MCF 10A (cell line): ENCODE measurements at regions of chr18 and their contacts with region 1.

Region 1: GRCh38 chr18:44589693-44590355 is 90.9 kb upstream of the SETBP1 start:
- DNase-seq: peak; percentile 78
- H3K4me3 Mint-ChIP-seq: no peak overlapping the region
- H3K27ac Mint-ChIP-seq: peak overlapping the region; percentile 69
- H3K4me1 Mint-ChIP-seq: peaks cover 40% of the 10 kb centered on the region
- H3K27me3 Mint-ChIP-seq: no peaks in the 10 kb centered on the region
- CTCF ChIP-seq: no peak

Region 2: DNA sequence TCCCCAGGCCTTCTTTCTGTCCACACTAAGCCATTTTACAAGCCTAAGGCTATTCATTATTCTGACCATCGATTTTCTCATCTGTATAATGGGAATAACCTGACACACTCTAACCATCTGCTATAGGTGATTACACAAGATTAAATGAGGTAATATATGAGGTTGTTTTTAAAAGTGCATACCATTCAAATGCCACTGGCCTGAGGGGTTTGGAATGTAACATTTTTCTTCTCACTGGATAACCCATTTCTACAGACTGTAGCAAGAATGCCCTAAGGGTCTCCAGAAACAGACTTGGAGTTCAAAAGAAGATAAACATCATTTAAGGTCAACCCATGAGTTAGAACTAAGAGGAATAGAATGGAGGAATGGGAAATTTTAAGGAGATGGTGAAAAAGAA is 20.8 kb before region 1 on chr18:
- CTCF ChIA-PET with region 1: interaction called, 3 read pairs
- POLR2A ChIA-PET with region 1: interaction called, 9 read pairs
- intact Hi-C with region 1: loop called (anchors 2 kb)
- DNase-seq: peak; percentile 27
- H3K4me3 Mint-ChIP-seq: no peak overlapping the region
- H3K27ac Mint-ChIP-seq: no peak overlapping the region
- H3K4me1 Mint-ChIP-seq: peaks cover 39% of the 10 kb centered on the region
- H3K27me3 Mint-ChIP-seq: no peaks in the 10 kb centered on the region
- CTCF ChIP-seq: no peak

Region 3: GRCh38 chr18:44601447-44601846 is 11.6 kb after region 1 on chr18:
- CTCF ChIA-PET with region 1: interaction called, 3 read pairs
- POLR2A ChIA-PET with region 1: interaction called, 15 read pairs
- intact Hi-C with region 1: no loop called
- DNase-seq: peak; percentile 77
- H3K4me3 Mint-ChIP-seq: no peak overlapping the region
- H3K27ac Mint-ChIP-seq: peak overlapping the region; percentile 80
- H3K4me1 Mint-ChIP-seq: peaks cover 46% of the 10 kb centered on the region
- H3K27me3 Mint-ChIP-seq: no peaks in the 10 kb centered on the region
- CTCF ChIP-seq: no peak